Breast epithelium (tissue), 4 donors: ENCODE measurements at regions of chr5 and their contacts with region 1.

Region 1: GRCh38 chr5:120082316-120083071 is 381.6 kb upstream of the PRR16 start:
- DNase-seq: no peak
- H3K4me3 ChIP-seq: no peak overlapping the region
- H3K27ac ChIP-seq: no peak overlapping the region
- H3K4me1 ChIP-seq: no peaks in the 10 kb centered on the region
- H3K27me3 ChIP-seq: no peaks in the 10 kb centered on the region
- CTCF ChIP-seq: no peak
- POLR2A ChIP-seq: no peak

Region 2: DNA sequence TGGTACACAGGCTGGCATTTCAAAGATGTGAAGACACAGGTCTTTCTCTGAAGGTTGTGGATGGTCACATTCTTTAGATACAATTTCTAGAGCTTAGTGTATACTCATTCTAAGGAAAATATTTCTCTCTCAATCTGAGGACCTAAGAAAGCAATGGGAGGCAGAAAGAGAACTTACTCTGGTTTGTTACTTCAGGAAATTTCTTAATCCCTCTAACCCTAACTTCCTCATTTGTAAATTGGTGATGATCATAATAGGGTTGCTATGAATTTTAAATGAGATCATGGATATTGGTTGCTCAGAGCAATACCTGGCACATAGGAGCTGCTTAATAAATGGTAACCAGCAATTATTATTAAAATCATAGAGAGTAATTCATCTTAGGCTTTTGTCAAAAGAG is 431.0 kb before region 1 on chr5:
- intact Hi-C with region 1: loop called (anchors 5 kb)
- DNase-seq: no peak
- H3K4me3 ChIP-seq: no peak overlapping the region
- H3K27ac ChIP-seq: no peak overlapping the region
- H3K4me1 ChIP-seq: no peaks in the 10 kb centered on the region
- H3K27me3 ChIP-seq: no peaks in the 10 kb centered on the region
- CTCF ChIP-seq: no peak
- POLR2A ChIP-seq: no peak